Right ventricle myocardium superior (tissue), 1 donor: ENCODE measurements at regions of chr2 and their contacts with region 1.

Region 1: DNA sequence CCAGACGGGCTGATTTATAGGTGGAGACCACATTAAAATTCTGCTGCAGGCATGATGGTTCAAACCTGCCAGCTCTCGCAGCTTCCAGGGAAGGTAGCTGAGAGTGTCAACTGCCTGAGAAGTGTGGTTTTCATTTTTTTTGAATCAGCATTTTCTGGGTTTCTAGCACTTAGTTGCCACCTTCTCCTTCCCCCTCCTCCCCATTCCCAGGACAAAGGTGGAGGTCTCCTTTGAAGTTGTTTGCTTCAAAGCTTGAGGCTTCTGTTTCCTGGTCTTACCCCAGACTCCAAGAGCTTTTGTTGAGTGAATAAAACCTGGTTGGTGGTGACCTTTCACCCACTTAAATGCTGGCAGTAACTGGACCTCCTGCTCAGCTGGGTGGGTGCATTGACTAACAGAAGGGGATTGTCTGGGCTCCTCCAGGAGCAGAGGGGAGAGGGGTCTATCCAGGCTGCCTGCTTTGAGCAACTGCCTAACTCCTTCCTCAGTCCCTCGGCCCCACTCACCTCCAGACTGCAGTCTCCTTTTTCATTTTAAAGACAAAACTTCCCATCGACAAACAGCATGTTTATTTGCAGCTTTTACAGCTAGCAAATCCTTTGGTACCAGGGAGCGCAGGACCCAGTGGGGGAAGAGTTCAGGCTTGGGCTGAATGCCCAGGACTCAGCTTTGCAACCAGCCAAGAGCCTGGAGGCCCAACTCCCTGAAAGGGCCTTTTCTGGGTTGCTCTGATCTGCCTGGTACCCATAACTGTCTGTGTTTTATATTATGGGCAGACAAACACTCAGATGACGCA is 3.5 kb downstream of the RHOB start:
- DNase-seq: peak; percentile 75
- ATAC-seq: peak; percentile 40

Region 2: GRCh38 chr2:20532634-20533437 is 82.4 kb after region 1 on chr2:
- intact Hi-C with region 1: loop called (anchors 5 kb)
- DNase-seq: no peak
- ATAC-seq: no peak

Region 3: GRCh38 chr2:20675701-20676352 is 225.4 kb after region 1 on chr2:
- intact Hi-C with region 1: no loop called
- DNase-seq: no peak
- ATAC-seq: peak; percentile 47